ENCODE measurements at regions of chr10 and their contacts with region 1.

Region 1: GRCh38 chr10:71569775-71570588 is 149.6 kb downstream of the C10orf105 start:
- DNase-seq: peak; percentile 83
- H3K4me3 Mint-ChIP-seq: no peak overlapping the region
- H3K27ac Mint-ChIP-seq: no peak overlapping the region
- H3K4me1 Mint-ChIP-seq: no peaks in the 10 kb centered on the region
- H3K27me3 Mint-ChIP-seq: no peaks in the 10 kb centered on the region

Region 2: DNA sequence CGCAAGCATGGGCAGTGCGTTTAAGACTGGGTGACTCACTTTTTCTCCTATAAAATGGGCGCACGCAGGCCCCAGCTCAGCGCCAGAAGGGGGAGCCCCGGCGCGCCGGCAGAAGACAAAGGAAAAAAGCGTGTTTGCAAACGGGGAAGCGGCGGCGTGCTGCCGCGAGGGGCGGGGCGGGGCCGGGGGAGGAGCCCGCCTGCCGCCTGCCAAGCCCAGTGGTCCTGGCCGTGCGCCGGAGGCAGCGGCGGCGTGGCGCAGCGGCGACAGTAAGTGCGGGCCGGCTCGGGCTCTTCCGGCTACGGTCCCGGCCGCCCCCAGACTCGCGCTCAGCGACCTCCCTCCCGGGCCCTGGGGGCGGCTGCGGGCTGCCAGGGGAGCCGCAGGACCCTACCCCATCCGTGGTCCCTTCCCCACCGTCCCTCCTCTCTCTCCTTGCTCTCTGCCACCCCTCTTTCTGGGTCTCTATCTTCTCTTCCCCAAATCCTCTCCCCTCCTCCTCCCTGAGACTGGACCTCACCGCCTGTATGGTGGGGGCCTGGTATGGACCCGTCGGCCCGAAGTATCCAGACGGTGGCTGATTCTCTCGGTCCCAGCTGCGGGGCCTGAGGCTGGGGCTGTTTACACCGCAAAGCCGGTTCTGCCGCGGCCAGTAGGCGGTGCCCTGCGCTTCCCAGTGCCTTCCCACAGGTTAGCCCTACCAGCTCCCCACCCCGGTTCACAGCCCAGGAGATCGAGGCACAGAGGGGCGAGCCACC is 250.8 kb before region 1 on chr10 and contains the start of gene SLC29A3:
- CTCF ChIA-PET with region 1: interaction called, 87 read pairs
- POLR2A ChIA-PET with region 1: interaction called, 3 read pairs
- intact Hi-C with region 1: loop called (anchors 2 kb)
- DNase-seq: peak; percentile 93
- H3K4me3 Mint-ChIP-seq: peak within 1 kb of the TSS; percentile 90
- H3K27ac Mint-ChIP-seq: peak within 1 kb of the TSS; percentile 46
- H3K4me1 Mint-ChIP-seq: peaks cover 23% of the 10 kb centered on the region
- H3K27me3 Mint-ChIP-seq: no peaks in the 10 kb centered on the region
- total RNA-seq, gene SLC29A3: 2.5 to 3.0 TPM

Region 3: DNA sequence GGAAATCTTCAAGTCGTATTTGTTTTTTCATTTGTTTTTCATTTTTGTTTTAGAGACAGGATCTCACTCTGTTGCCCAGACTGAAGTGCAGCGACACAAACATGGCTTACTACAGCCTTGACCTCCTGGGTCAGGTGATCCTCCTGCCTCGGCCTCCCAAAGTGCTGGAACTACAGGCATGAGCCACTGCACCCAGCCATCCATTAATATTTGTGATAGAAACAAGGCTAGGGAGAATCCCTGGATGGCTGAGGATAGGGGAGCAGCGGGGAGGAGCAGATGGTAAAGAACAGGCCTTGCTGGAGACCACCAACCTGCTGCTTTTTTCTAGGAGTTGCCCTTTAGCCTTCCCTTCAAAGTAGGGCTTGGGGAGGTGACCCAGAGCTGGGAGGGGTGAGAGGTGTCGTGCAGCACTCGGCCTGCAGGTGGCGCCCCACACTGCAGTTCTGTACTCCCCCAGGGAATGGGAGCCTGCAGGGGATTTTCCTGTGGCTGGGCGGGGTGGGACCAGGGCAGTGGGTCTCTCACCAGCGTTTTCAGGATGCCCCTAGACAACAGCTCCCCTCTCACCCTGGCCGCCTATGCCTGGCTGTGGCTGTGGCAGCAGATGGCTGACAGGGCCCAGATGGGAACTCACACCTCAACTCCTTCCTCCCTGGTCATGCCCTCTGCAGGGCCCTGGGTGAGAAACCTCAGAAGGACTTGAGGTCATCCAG is 185.9 kb before region 1 on chr10:
- CTCF ChIA-PET with region 1: interaction called, 68 read pairs
- POLR2A ChIA-PET with region 1: no interaction called
- intact Hi-C with region 1: loop called (anchors 1 kb)
- DNase-seq: peak; percentile 81
- H3K4me3 Mint-ChIP-seq: no peak overlapping the region
- H3K27ac Mint-ChIP-seq: no peak overlapping the region
- H3K4me1 Mint-ChIP-seq: no peaks in the 10 kb centered on the region
- H3K27me3 Mint-ChIP-seq: peaks cover 1% of the 10 kb centered on the region

Region 4: DNA sequence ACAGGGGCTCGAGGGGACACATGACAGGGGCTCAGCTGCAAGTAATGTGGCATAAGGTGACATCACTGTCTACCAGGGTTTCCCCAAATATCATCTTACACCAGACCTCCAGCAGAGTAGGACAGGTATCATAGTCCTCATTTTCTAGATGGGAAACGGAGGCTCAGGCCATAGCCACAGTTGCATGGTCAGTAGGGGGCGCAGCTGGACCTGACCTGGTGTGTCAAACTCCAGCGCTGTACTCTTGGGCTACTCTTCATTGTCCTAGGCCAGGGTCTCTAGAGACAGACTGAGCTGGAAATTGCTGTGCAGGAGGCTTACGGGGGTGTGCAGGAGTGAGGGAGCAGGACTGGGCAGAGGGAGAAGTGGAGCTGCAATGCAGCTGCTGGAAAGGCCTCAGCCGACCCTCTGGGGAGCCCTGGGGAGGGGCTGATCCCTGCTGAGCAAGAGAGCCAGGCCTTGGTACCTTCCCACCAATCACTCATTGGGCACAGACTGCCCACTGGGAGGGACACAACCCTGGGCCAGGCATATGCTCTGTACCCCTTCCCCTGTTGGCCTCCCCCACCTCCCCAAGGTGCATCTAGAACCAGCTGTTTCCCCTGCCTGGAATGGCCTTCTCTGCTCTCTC is 83.4 kb before region 1 on chr10:
- CTCF ChIA-PET with region 1: interaction called, 32 read pairs
- POLR2A ChIA-PET with region 1: no interaction called
- intact Hi-C with region 1: loop called (anchors 1 kb)
- DNase-seq: peak; percentile 70
- H3K4me3 Mint-ChIP-seq: no peak overlapping the region
- H3K27ac Mint-ChIP-seq: no peak overlapping the region
- H3K4me1 Mint-ChIP-seq: no peaks in the 10 kb centered on the region
- H3K27me3 Mint-ChIP-seq: peaks cover 2% of the 10 kb centered on the region

Region 5: GRCh38 chr10:71517298-71518169 is 52.4 kb before region 1 on chr10:
- CTCF ChIA-PET with region 1: interaction called, 11 read pairs
- POLR2A ChIA-PET with region 1: no interaction called
- intact Hi-C with region 1: no loop called
- DNase-seq: no peak
- H3K4me3 Mint-ChIP-seq: no peak overlapping the region
- H3K27ac Mint-ChIP-seq: no peak overlapping the region
- H3K4me1 Mint-ChIP-seq: no peaks in the 10 kb centered on the region
- H3K27me3 Mint-ChIP-seq: peaks cover 6% of the 10 kb centered on the region

Region 6: DNA sequence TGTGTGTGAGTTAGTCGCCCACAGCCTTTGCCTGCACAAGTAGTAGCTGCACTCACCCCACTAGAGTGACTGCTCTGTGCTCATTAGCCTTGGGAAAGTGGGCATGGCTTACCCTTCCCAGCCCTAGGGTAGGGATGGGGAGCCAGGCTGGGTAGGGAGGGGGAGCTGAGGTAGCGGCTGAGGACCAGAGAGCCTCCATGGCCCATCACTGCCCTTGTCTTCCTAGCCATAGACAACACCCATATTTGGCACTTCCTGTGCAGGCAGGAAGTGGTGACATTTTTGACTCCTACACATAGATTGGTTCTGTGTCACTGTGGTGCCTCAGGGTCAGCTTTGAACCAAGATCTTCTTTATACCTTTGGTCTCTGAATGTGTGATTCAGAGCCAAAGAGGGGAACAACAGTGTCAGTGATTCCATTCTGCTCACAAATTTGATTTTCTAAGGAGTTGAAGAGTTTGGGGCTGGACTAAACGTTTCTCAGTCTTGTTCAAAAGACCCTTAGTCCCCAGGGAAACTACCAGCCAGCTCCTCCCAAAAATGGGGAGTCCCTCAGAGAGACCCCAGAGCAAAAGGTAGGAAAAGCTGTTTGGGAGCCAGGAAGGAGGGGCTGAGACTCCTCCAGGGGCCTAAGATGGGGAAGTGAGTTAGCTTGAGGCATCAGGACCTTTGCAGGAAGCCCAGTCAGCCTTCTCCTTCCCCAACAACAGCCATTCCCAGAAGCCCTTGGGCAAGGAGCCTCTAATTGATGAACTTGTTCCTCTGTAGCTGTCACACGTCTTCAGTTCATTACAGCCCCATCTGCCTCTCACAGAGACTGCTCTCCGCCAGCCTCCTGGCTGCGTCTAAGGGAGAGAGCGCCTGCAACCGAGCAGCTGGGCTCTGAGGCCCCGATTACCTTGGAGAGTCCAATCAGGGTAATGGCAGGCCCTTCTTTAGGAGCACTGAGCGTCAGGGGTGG is 38.2 kb before region 1 on chr10:
- CTCF ChIA-PET with region 1: interaction called, 10 read pairs
- POLR2A ChIA-PET with region 1: no interaction called
- intact Hi-C with region 1: no loop called
- DNase-seq: peak; percentile 69
- H3K4me3 Mint-ChIP-seq: no peak overlapping the region
- H3K27ac Mint-ChIP-seq: peak overlapping the region; percentile 92
- H3K4me1 Mint-ChIP-seq: peaks cover 21% of the 10 kb centered on the region
- H3K27me3 Mint-ChIP-seq: no peaks in the 10 kb centered on the region

Region 7: DNA sequence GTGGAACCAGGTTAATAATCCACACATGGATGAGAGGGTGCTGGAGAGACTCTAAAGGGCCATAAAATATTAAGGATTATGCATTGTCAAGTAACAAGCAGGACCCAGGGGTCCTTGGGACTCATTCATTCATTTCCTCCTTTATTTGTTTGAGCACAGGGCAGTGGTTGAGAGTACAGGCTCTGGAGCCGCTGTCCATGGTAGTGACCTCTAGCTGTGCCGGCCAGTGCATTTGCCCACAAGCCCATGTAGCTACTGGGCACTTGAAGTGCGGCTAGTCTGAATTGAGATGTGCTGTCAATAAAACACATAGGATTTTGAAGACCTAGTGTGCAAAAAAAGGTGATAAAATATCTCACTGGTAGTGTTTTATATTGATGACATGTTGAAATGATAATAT is 12.0 kb after region 1 on chr10:
- CTCF ChIA-PET with region 1: interaction called, 11 read pairs
- POLR2A ChIA-PET with region 1: no interaction called
- intact Hi-C with region 1: no loop called
- DNase-seq: no peak
- H3K4me3 Mint-ChIP-seq: no peak overlapping the region
- H3K27ac Mint-ChIP-seq: no peak overlapping the region
- H3K4me1 Mint-ChIP-seq: no peaks in the 10 kb centered on the region
- H3K27me3 Mint-ChIP-seq: no peaks in the 10 kb centered on the region

Region 8: DNA sequence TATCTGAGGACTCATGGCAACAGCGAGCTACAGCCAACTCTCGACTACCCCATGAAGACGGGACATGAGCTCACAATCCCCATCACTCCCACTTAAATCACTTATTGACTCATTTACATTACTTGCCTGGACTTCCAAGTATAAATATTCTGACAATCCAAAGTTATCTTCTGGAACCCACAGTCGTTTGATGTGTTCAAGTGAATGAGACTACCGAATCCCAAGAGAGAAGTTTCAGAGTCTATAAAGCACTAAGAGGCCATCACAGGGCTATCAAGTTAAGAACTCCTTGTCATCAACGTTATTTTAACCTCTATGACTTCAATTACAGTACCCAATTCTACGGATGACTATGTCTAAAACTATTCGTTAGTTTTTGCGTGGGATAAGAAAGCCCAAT is 634.3 kb after region 1 on chr10:
- CTCF ChIA-PET with region 1: no interaction called
- POLR2A ChIA-PET with region 1: no interaction called
- intact Hi-C with region 1: no loop called
- DNase-seq: no peak
- H3K4me3 Mint-ChIP-seq: no peak overlapping the region
- H3K27ac Mint-ChIP-seq: no peak overlapping the region
- H3K4me1 Mint-ChIP-seq: peaks cover 9% of the 10 kb centered on the region
- H3K27me3 Mint-ChIP-seq: no peaks in the 10 kb centered on the region